G401 (cell line): ENCODE measurements at regions of chr20 and their contacts with region 1.

Region 1: DNA sequence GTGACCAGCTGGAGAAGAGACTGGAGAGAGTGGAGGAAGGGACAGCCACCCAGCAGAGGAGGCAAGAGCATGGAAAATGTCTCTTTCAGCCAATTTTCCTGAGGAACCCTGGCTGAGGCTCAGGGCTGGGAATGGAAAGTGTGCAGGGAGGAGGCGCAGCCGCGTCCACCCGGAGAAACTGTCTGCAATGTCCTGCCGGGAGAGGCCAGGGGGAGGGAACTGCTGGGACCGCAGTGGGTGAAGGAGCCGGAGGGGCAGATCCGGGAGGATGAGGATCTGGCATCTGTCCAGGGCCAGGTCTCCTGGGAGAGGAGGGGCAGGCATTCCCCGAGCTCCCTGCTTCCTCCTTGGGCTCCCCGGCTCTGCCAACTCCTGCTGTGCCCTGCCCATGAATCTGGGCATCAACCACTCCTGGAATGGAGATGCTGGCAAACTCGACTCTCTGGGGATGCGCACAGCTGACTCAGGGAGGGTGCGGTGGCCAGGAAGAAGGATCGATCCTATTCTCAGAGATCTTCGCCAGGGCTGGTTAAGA is 17.4 kb upstream of the HM13 start:
- DNase-seq: no peak

Region 2: GRCh38 chr20:31446084-31446819 is 50.6 kb before region 1 on chr20:
- in situ Hi-C with region 1: loop called (anchors 5 kb)
- DNase-seq: no peak

Region 3: DNA sequence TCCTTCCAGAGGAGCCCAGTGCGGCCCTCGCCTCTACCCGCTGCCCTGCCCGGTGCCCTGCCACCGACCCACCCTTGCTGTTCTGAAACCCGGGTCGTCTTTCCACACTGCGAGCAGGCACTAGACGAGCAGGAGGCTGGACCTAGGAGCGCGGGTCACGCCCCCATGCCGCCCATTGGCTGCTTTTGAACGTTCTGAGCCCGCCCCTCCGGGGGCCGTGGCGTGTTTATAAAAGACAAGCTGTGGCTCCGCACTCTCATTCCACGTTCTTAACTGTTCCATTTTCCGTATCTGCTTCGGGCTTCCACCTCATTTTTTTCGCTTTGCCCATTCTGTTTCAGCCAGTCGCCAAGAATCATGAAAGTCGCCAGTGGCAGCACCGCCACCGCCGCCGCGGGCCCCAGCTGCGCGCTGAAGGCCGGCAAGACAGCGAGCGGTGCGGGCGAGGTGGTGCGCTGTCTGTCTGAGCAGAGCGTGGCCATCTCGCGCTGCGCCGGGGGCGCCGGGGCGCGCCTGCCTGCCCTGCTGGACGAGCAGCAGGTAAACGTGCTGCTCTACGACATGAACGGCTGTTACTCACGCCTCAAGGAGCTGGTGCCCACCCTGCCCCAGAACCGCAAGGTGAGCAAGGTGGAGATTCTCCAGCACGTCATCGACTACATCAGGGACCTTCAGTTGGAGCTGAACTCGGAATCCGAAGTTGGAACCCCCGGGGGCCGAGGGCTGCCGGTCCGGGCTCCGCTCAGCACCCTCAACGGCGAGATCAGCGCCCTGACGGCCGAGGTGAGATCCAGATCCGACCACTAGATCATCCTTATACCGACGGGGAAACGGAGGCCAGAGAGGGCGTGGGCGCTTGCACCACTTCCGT is 108.4 kb after region 1 on chr20 and contains the start of gene ID1:
- in situ Hi-C with region 1: no loop called
- DNase-seq: peak; percentile 96
- total RNA-seq, gene ID1: 1,330 and 1,439 TPM in 2 replicates

Region 4: GRCh38 chr20:31751126-31751525 is 254.3 kb after region 1 on chr20:
- in situ Hi-C with region 1: no loop called
- DNase-seq: no peak